Left colon (tissue), 2 donors: ENCODE measurements at regions of chr14 and their contacts with region 1.

Region 1: DNA sequence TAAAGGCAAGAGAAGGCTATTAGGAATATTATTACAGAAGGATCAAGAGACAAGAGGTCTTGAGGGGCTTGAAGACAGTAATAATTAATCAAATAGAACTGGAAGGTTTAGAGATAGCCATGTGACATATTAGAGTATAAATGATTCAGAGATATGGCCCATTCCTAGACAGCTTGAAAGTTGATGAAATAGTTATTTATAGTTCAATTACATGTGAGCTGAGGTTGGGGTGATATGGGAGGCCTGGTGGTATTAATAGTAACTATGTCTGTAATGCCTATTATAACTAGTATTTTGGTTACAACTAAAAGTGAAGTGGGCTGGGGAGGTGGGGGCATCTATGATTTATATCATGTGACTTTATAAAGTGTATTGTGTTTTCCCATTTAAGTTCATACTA is 14.1 kb upstream of the MIS18BP1 start:
- DNase-seq: no peak
- ATAC-seq: no peak

Region 2: DNA sequence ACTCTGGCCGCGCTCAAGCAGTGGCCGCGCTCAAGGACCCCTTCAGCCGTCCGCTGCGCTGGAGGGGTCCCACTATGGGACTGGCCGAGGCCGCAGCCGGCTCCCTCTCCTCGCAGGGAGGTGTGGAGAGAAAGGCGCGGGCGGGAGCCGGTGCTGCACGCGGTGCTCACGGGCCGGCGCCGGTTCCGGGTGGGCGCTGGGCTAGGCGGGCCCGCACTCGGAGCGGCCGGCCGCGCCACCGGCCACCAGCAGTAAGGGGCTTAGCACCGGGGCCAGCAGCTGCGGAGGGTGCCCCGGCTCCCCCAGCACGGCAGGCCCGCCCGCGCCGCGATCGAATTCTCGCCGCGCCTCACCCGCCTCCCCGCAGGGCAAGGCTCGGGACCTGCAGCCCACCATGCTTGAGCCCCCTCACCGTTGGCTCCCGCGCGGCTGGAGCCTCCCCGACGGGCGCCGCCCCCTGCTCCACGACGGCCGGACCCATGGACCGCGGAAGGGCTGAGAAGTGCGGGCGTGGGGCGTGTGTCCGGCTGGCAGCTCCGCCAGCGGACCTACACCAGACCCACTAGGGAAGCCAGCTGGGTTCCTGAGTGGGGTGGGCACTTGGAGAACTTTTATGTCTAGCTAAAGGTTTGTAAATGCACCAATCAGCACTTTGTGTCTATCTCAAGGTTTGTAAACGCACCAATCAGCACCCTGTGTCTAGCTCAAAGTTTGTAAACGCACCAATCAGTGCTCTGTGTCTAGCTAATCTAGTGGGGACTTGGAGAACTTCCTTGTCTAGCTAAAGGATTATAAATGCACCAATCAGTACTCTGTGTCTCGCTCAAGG is 354.8 kb before region 1 on chr14:
- intact Hi-C with region 1: loop called in 1 of 2 experiments (anchors 5 kb)
- DNase-seq: no peak
- ATAC-seq: peak; percentile 27